ENCODE measurements at regions of chr3 and their contacts with region 1.

Region 1: DNA sequence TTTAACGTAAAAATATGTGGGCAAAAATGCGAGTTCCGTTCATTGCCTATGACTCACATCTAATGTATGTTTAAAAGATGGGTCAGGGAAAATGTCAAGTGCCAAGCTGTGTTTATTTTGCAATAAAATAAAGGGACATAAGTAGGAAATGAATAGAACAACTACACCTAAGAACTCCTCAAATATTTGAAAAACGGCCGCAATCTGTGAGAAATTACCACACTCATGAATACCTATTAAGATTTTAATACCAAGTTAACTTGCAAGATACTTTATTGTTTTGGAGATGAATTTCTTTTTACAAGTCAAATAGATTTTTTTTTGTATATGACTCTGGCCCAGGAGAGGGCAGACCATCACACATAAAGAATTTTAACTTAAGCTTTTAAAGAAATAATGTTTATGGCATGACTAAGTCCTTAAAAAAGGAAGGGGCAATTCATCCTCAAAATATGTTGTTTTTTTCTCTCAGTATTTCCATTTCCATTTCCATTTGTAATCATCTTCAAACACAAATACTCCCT is 152.7 kb downstream of the SUCNR1 start:
- DNase-seq: peak; percentile 22 to 90
- H3K4me3 ChIP-seq: no peak overlapping the region; the same call in 1 of the 2 replicates
- H3K27ac ChIP-seq: peak overlapping the region; percentile 81
- H3K4me1 ChIP-seq: peaks cover 38% of the 10 kb centered on the region
- H3K27me3 ChIP-seq: no peaks in the 10 kb centered on the region
- CTCF ChIP-seq: peak; percentile 71

Region 2: DNA sequence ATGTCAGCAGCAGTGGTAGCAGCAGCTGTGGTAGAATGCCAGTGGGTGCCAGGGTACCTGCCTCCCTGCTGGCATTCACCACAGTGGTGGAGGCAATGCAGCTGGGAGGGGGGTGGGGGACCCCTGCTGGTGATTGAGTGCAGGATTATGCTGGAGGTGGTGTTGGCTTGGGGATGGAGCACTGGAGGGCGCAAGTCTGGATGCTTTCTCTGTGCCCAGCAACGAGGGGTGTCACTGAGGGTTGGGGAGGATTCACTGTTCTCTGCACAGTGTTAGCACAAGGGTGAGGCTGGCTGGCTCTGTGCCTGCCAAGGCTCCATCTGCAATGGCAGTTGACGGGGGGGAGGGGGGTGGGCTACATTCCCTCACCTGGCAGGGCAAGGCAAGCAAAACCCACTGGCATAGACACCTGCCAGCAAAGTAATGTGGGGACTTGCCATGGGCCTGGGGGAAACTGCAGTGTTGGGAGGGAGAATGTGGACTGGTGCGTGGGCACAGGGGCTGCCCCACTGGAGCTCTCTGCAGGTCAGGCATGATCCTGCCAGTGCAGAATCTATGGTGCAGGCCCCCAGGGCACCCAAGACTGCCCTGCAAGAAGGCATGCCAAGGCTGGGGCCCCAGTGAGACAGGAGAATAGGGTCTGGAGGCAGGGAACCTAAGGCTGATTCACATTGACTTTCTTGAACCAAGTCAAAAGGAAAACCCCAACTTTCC is 1185.1 kb before region 1 on chr3:
- CTCF ChIA-PET with region 1: no interaction called
- POLR2A ChIA-PET with region 1: no interaction called
- intact Hi-C with region 1: no loop called
- DNase-seq: no peak
- H3K4me3 ChIP-seq: no peak overlapping the region
- H3K27ac ChIP-seq: no peak overlapping the region
- H3K4me1 ChIP-seq: peaks cover 14% of the 10 kb centered on the region
- H3K27me3 ChIP-seq: no peaks in the 10 kb centered on the region
- CTCF ChIP-seq: no peak; the same call in 1 of the 2 replicates

Region 3: GRCh38 chr3:151770956-151771355 is 255.1 kb before region 1 on chr3:
- CTCF ChIA-PET with region 1: no interaction called
- POLR2A ChIA-PET with region 1: no interaction called
- intact Hi-C with region 1: loop called (anchors 2 kb)
- DNase-seq: peak in 1 of 2 experiments; percentile 45
- H3K4me3 ChIP-seq: no peak overlapping the region
- H3K27ac ChIP-seq: no peak overlapping the region
- H3K4me1 ChIP-seq: peaks cover 13% of the 10 kb centered on the region
- H3K27me3 ChIP-seq: no peaks in the 10 kb centered on the region
- CTCF ChIP-seq: no peak

Region 4: GRCh38 chr3:151925876-151926275 is 100.2 kb before region 1 on chr3:
- CTCF ChIA-PET with region 1: no interaction called
- POLR2A ChIA-PET with region 1: no interaction called
- intact Hi-C with region 1: loop called (anchors 1 kb)
- DNase-seq: peak; percentile 44 to 73
- H3K4me3 ChIP-seq: no peak overlapping the region
- H3K27ac ChIP-seq: no peak overlapping the region
- H3K4me1 ChIP-seq: peaks cover 7% of the 10 kb centered on the region
- H3K27me3 ChIP-seq: no peaks in the 10 kb centered on the region
- CTCF ChIP-seq: no peak

Region 5: DNA sequence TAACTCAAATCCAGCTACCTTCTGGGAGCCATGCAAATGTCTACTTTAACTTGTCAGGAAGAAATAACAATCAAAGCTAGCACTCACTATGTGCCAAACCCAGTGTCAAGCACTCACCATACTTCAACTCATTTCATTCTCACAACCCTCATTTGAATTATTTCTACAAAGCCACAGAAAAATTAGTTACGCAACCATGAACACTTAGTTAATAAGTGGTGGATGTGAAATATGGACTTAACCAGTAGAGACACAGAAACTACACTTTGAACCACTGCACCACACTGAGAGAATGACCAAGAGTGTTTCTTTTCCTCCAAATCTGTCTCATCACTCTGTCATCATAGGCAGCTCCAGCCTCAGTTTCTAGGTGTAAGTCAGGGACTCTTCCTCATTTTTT is 151.7 kb after region 1 on chr3:
- CTCF ChIA-PET with region 1: interaction called, 10 read pairs
- POLR2A ChIA-PET with region 1: no interaction called
- intact Hi-C with region 1: no loop called
- DNase-seq: no peak
- H3K4me3 ChIP-seq: no peak overlapping the region
- H3K27ac ChIP-seq: no peak overlapping the region
- H3K4me1 ChIP-seq: peaks cover 16% of the 10 kb centered on the region
- H3K27me3 ChIP-seq: no peaks in the 10 kb centered on the region
- CTCF ChIP-seq: no peak

Region 6: DNA sequence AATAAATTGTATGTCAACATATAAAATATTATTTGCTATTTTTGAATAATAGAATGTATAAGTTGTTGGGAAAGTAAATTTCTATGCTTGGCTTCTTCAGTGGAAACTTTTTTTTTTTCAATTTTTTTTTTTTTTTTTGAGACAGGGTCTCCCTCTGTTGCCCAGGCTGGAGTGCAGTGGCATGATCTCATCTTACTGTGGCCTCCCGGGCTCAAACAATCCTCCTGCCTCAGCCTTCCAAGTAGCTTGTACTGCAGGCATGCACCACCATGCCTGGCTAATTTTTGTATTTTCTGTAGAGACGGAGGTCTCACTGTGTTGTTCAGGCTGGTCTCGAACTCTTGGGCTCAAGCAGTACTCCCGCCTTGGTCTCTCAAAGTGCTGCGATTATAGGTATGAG is 259.4 kb after region 1 on chr3:
- CTCF ChIA-PET with region 1: no interaction called
- POLR2A ChIA-PET with region 1: interaction called, 10 read pairs
- intact Hi-C with region 1: no loop called
- DNase-seq: no peak
- H3K4me3 ChIP-seq: no peak overlapping the region
- H3K27ac ChIP-seq: no peak overlapping the region
- H3K4me1 ChIP-seq: peaks cover 13% of the 10 kb centered on the region
- H3K27me3 ChIP-seq: no peaks in the 10 kb centered on the region
- CTCF ChIP-seq: no peak

Region 7: DNA sequence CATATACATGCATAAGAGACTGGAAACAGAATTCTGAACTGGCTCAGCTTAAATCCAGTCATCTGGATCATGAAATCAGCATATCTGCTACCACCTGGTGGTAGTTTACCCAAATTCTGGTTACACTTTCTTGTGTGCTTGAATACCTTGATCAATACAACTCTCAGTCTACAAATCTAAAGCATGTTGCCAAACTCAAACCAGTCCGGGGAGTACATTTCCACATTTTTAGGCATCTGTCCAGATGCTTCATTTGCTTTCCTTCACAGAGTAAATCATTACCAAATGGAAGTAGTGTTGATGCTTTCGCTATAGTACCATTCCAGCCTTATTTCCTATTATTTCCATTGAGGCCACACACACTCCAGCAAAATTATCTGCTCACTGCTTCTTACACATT is 935.2 kb after region 1 on chr3:
- CTCF ChIA-PET with region 1: no interaction called
- POLR2A ChIA-PET with region 1: no interaction called
- intact Hi-C with region 1: loop called (anchors 10 kb)
- DNase-seq: peak in 1 of 2 experiments; percentile 56
- H3K4me3 ChIP-seq: no peak overlapping the region
- H3K27ac ChIP-seq: no peak overlapping the region
- H3K4me1 ChIP-seq: peaks cover 33% of the 10 kb centered on the region
- H3K27me3 ChIP-seq: no peaks in the 10 kb centered on the region
- CTCF ChIP-seq: peak; percentile 62

Measured in PC-9 (cell line).